OCI-LY7 (cell line): ENCODE measurements at regions of chr2 and their contacts with region 1.

Region 1: GRCh38 chr2:8551622-8552074 is 130.2 kb upstream of the ID2 start:
- DNase-seq: peak; percentile 78
- H3K4me3 ChIP-seq: peak overlapping the region; percentile 62
- H3K27ac ChIP-seq: peak overlapping the region; percentile 98
- H3K4me1 ChIP-seq: peaks cover 97% of the 10 kb centered on the region
- CTCF ChIP-seq: no peak; the same call in 1 of the 2 replicates

Region 2: DNA sequence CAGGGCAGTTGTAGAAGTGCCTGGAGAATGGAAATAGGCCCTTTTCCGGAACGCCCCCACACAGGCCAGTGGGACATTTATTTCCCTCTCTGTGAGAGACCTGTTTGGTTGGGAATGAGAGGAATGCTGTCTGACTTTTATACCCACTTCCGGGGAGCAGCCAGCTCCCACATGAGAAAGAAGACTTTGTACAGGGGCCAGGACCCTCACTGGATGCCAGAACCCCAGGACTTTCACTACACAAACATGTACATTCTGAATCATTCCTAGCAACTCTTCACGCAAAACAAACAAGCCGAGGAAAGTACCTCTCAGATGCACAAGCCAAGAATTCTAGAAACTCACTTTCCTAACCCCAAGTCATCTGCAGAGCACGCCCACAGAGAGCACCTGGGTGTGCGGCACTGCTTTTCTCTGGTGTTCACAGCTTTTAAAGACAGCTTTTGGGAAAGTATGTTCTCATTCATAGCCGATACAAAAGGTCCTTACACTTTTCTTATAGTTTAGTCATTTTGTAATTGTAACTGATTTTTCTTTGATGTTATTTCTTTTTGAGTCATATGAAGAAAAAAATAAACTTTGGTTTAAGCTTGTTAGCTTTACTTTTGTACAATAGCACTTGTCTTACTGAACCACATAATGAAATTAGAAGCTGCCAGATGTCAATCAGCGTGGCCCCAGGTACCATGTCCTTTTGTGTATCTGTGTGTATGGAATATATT is 725.9 kb before region 1 on chr2:
- CTCF ChIA-PET with region 1: no interaction called
- POLR2A ChIA-PET with region 1: no interaction called
- intact Hi-C with region 1: no loop called
- DNase-seq: no peak
- H3K4me3 ChIP-seq: no peak overlapping the region
- H3K27ac ChIP-seq: no peak overlapping the region
- H3K4me1 ChIP-seq: no peaks in the 10 kb centered on the region
- CTCF ChIP-seq: no peak

Region 3: GRCh38 chr2:8488001-8488738 is 63.5 kb before region 1 on chr2:
- CTCF ChIA-PET with region 1: no interaction called
- POLR2A ChIA-PET with region 1: no interaction called
- intact Hi-C with region 1: no loop called
- DNase-seq: no peak
- H3K4me3 ChIP-seq: no peak overlapping the region
- H3K27ac ChIP-seq: no peak overlapping the region
- H3K4me1 ChIP-seq: peaks cover 55% of the 10 kb centered on the region
- CTCF ChIP-seq: no peak

Region 4: GRCh38 chr2:8534729-8535468 is 16.7 kb before region 1 on chr2:
- CTCF ChIA-PET with region 1: no interaction called
- POLR2A ChIA-PET with region 1: interaction called, 18 read pairs
- intact Hi-C with region 1: no loop called
- DNase-seq: peak; percentile 70
- H3K4me3 ChIP-seq: no peak overlapping the region
- H3K27ac ChIP-seq: peak overlapping the region; percentile 58
- H3K4me1 ChIP-seq: peaks cover 69% of the 10 kb centered on the region
- CTCF ChIP-seq: no peak

Region 5: DNA sequence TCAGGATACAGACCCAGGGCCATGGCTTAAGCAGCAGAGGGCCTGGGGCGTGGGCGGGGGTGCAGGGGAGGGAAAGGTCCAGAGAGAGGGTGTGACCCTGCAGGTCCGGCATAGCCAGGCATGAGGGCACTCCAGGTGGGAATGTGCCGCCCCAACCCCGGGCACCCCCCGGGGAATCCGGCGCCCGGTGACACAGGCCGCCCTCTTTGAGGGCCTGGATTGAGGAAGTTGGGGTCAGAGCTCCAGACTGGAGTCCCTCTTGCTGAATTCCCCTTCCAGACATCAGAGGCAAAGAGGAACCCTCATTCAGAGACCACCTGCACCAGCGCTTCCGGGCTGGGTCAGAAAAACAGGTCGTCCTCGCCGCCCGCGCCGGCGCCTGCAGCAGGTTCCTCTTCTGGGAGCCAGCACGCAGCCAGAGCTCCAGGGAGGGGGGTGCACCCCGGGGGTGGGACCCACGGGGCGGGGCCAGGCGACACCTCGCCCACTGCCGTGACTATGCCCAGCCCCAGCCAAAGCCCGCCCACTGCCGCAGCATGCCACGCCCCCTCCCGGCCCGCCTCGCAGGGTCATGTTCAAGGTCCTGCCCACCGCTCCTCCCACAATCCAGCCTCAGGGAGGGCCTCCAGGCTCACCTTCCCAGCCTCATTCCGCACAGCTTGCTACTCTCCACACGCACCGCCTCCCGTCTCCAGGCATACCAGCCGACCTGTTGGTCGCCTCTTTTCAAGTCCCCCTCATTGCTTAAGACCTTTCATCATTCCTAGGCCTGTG is 31.9 kb after region 1 on chr2:
- CTCF ChIA-PET with region 1: interaction called, 5 read pairs
- POLR2A ChIA-PET with region 1: interaction called, 59 read pairs
- intact Hi-C with region 1: no loop called
- DNase-seq: peak; percentile 99
- H3K4me3 ChIP-seq: peak overlapping the region; percentile 61
- H3K27ac ChIP-seq: peak overlapping the region; percentile 98
- H3K4me1 ChIP-seq: peaks cover 97% of the 10 kb centered on the region
- CTCF ChIP-seq: no peak

Region 6: DNA sequence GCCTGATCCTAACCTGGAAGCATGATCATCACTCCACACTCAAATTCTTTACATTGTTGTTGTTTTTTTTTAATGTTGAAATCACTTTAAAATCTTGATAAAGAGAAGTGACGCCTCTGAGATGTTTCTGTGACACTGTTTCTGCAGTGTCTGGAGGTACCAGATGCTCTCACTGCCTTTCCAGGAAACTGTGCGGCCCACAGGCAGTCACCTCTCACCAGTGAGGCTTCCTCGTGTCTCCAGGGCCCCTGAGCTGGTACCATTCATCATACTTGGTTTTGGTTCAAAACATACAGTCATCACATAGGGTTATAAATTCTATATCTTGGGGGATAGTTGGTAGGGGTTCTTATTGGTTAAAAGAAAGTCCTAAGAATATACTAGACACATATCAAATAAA is 120.2 kb after region 1 on chr2:
- CTCF ChIA-PET with region 1: no interaction called
- POLR2A ChIA-PET with region 1: no interaction called
- intact Hi-C with region 1: no loop called
- DNase-seq: no peak
- H3K4me3 ChIP-seq: no peak overlapping the region
- H3K27ac ChIP-seq: no peak overlapping the region
- H3K4me1 ChIP-seq: no peaks in the 10 kb centered on the region
- CTCF ChIP-seq: no peak